RWPE1 (cell line): ENCODE measurements at regions of chr1 and their contacts with region 1.

Region 1: DNA sequence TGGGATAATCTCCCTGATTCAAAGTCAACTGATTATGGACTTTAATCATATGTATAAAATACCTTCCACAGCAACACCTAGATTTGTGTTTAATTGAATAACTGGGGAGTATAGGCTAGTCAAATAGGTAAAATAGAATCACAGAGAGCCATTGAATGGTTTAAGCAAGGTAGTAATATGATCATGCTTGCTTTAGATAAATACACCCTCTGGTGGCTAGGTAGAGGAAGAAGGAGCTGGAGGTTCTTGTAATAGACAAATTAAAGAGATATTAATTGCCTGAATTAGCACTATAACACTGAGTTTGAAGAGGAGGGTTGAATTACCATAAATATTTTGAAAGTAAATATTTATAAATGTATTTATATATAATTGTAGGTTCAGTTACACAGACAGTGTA is 40.3 kb downstream of the DIRAS3 start:
- DNase-seq: peak; percentile 45
- H3K27ac ChIP-seq: no peak overlapping the region
- CTCF ChIP-seq: 0 out of 2 replicates have a peak, but pooled peaks have one; percentile 12

Region 2: GRCh38 chr1:67853704-67854103 is 156.4 kb before region 1 on chr1:
- CTCF ChIA-PET with region 1: interaction called, 13 read pairs
- POLR2A ChIA-PET with region 1: no interaction called
- DNase-seq: peak; percentile 70
- H3K27ac ChIP-seq: no peak overlapping the region
- CTCF ChIP-seq: peak; percentile 38; the same call in 1 of the 2 replicates

Region 3: GRCh38 chr1:68024389-68025338 is 14.6 kb after region 1 on chr1:
- CTCF ChIA-PET with region 1: no interaction called
- POLR2A ChIA-PET with region 1: no interaction called
- DNase-seq: no peak
- H3K27ac ChIP-seq: no peak overlapping the region
- CTCF ChIP-seq: no peak

Region 4: DNA sequence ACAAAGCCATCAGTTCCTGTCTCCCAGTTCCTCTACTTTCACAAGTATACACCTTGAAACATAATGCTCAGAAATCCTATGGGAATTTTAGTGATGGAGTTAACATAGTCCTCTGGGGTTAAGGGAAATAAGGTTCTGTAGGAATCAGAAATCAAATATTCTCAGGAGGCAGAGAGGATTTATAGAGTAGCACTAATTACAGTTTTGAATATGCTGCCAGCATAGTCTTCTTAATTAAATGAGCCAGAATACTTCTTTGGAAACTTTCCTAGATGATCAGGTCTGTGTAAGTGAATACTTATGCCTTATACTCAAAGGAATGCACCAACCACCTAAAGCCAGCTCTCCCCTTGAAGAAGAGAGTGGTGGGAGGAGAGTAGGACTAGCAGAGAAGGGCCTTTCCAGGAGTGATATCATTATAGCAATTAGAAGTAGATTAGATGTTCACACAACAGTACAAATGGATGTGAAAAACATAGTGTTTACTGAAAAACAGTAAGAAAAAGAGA is 71.7 kb after region 1 on chr1:
- CTCF ChIA-PET with region 1: no interaction called
- POLR2A ChIA-PET with region 1: no interaction called
- DNase-seq: no peak
- H3K27ac ChIP-seq: no peak overlapping the region
- CTCF ChIP-seq: no peak

Region 5: GRCh38 chr1:68255301-68255700 is 245.2 kb after region 1 on chr1:
- CTCF ChIA-PET with region 1: no interaction called
- POLR2A ChIA-PET with region 1: no interaction called
- DNase-seq: no peak
- H3K27ac ChIP-seq: no peak overlapping the region
- CTCF ChIP-seq: no peak